ENCODE measurements at regions of chr3 and their contacts with region 1.

Region 1: DNA sequence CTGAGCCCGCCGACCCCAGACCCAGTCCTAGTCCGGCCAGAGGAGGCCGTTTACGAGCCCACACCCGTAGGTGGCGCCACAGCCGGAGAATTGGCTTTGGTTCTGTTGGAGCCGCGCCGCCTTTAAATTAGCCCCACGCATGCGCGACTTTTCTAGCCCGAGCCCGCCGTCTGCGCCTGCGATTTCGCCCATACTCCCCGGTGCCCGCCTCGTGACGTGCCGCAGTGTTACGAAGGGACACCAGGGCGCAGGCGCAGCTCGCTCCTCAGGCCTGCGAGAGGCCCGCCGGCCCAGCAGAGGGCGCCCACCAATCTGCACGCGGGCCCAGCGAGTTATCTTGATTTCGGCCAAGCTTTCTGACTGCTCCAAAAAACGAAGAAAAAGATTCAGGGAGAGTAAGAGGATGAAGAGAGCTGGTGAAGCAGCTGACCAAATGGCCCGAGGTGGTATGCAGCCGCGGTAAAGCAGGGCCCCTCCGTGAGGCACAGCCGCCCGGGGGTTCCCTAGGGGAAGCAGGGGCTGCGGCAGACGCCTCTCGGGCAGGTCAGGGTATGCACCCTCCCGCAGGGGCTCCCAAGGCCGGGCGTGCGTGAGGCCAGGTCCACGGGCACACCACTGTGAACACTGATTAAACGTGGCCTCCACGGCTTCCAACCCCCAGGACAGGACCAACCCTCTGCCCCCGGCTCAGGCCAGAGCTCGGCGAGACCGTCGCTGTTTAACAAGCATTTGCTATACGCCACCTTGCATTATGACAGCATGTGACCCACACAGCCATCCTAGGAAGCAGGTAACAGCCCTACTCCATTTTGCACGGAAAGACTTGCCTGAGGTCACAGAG is 32.8 kb downstream of the RPN1 start:
- DNase-seq: peak in 1 of 2 donors; percentile 95
- H3K4me3 ChIP-seq: peak overlapping the region; percentile 57 to 80
- H3K27ac ChIP-seq: peak overlapping the region; percentile 95
- H3K4me1 ChIP-seq: peaks cover 22% of the 10 kb centered on the region
- H3K27me3 ChIP-seq: no peaks in the 10 kb centered on the region
- CTCF ChIP-seq: peak; percentile 84 to 98 (median 96)
- POLR2A ChIP-seq: no peak

Region 2: GRCh38 chr3:128226795-128227395 is 390.9 kb before region 1 on chr3:
- intact Hi-C with region 1: no loop called
- DNase-seq: peak in 1 of 2 donors; percentile 42
- H3K4me3 ChIP-seq: no peak overlapping the region
- H3K27ac ChIP-seq: peak overlapping the region; percentile 46
- H3K4me1 ChIP-seq: no peaks in the 10 kb centered on the region
- H3K27me3 ChIP-seq: no peaks in the 10 kb centered on the region
- CTCF ChIP-seq: peak in 2 of 3 experiments; percentile 18 to 24
- POLR2A ChIP-seq: no peak

Region 3: GRCh38 chr3:128794770-128795649 is 177.2 kb after region 1 on chr3:
- intact Hi-C with region 1: loop called (anchors 10 kb)
- DNase-seq: no peak
- H3K4me3 ChIP-seq: no peak overlapping the region
- H3K27ac ChIP-seq: peak overlapping the region; percentile 57
- H3K4me1 ChIP-seq: peaks cover 28% of the 10 kb centered on the region
- H3K27me3 ChIP-seq: no peaks in the 10 kb centered on the region
- CTCF ChIP-seq: peak; percentile 48 to 80 (median 71)
- POLR2A ChIP-seq: no peak

Measured in vagina (tissue), 2 donors.